ENCODE measurements at regions of chr6 and their contacts with region 1.

Region 1: DNA sequence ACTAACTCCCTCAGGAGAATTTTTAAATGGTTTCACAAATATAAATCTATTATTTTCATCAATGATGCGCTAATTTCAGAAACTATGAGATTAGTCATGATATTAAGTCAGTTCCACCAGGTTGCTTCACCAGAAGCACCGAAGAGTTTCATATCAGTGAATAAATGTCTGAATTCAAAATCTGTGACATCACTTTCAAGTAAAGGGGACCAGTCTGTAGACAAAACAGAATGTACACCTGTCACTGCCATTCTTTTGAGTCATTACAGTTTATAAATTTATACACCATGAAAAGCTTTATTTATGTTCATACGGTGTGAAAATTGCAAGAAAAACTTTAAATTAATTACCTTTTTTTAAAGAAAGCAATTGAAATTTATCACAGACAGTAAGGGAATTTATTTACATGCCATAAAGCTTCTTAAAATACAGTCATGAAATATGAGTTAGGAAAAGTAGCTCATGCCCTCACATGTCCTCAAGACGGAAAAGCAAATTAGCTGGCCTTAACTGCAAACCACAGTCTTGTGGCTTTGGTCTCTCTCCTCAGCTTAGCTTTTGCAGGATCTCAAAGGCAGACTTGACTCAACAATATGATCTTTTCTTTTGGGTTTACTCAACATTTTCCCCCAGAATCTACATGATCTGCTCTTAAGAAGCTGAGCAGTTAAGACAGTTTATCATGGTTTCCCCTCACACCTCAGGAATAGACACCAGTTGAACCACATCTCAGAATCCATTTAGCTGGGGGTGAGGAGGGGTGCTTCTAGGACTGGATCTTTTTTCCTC is 177.7 kb upstream of the MCHR2 start:
- DNase-seq: peak; percentile 12
- H3K4me3 Mint-ChIP-seq: no peak overlapping the region
- H3K27ac Mint-ChIP-seq: no peak overlapping the region
- H3K4me1 Mint-ChIP-seq: peaks cover 24% of the 10 kb centered on the region
- H3K27me3 Mint-ChIP-seq: peaks cover 4% of the 10 kb centered on the region

Region 2: GRCh38 chr6:98678481-98678880 is 1493.2 kb before region 1 on chr6:
- intact Hi-C with region 1: no loop called
- DNase-seq: no peak
- H3K4me3 Mint-ChIP-seq: no peak overlapping the region
- H3K27ac Mint-ChIP-seq: no peak overlapping the region
- H3K4me1 Mint-ChIP-seq: no peaks in the 10 kb centered on the region
- H3K27me3 Mint-ChIP-seq: peaks cover 4% of the 10 kb centered on the region

Region 3: DNA sequence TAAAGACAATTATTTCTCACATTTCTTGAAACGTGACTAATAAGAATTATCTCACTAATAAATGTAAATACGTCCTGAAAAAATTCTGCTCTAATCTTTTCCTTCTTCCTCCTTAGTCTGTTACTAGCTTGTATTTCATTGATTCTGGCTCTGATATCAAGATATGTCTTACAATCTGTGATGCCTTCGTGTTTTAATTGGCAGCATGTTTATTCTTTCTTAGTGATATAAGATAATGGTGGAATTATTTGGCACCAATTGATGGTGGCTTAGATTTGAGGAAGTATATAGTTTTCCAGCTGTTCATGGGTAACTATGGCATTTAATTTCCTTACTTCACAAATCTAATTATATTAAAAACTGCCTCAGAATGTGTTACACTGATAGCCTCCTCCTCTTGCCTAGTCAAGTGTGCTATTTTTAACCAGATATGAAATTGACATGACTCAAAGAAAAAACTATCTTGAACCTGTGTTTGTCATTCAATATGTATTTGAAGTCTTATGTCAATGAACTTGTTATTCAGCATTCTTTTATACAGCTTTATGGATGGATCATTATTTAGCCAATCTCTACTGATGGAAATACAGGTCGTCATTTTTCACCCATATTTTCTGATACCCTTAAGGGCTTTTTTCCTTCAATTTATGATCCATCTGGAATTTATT is 608.5 kb before region 1 on chr6:
- intact Hi-C with region 1: no loop called
- DNase-seq: no peak
- H3K4me3 Mint-ChIP-seq: no peak overlapping the region
- H3K27ac Mint-ChIP-seq: no peak overlapping the region
- H3K4me1 Mint-ChIP-seq: peaks cover 35% of the 10 kb centered on the region
- H3K27me3 Mint-ChIP-seq: no peaks in the 10 kb centered on the region

Region 4: DNA sequence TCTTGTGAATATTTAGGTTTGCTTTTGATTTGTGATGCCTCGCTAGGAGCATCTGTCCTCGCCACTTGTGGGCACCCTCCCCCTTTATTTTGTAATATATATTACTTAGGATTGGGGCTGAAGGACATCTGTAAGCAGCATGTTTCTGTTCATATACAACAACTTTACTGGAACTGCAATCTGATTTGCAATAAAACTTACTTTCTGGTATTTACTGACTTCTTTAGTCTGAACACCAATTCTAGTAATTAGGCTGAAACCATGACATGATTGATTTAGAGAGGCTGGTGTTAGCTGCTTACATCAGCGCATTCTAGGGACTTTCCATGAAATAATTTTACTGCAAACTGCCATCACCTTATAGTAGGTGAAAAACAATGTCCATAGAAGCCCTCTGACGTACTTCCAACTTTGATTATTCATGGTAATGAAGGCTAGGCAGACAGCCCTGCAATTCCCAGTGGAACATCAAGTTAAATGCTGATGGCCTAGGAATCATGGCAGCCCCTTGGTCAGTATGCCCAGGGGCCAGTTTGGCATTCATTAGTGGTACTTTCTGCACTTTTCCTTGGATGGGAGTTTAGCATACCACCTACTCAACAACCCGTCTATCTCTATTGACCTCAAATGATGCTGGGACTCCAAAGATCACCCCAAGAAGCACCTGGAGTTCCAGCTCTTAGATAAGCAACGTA is 44.8 kb before region 1 on chr6:
- intact Hi-C with region 1: loop called (anchors 5 kb)
- DNase-seq: no peak
- H3K4me3 Mint-ChIP-seq: no peak overlapping the region
- H3K27ac Mint-ChIP-seq: peak overlapping the region; percentile 38
- H3K4me1 Mint-ChIP-seq: peaks cover 6% of the 10 kb centered on the region
- H3K27me3 Mint-ChIP-seq: no peaks in the 10 kb centered on the region

Region 5: DNA sequence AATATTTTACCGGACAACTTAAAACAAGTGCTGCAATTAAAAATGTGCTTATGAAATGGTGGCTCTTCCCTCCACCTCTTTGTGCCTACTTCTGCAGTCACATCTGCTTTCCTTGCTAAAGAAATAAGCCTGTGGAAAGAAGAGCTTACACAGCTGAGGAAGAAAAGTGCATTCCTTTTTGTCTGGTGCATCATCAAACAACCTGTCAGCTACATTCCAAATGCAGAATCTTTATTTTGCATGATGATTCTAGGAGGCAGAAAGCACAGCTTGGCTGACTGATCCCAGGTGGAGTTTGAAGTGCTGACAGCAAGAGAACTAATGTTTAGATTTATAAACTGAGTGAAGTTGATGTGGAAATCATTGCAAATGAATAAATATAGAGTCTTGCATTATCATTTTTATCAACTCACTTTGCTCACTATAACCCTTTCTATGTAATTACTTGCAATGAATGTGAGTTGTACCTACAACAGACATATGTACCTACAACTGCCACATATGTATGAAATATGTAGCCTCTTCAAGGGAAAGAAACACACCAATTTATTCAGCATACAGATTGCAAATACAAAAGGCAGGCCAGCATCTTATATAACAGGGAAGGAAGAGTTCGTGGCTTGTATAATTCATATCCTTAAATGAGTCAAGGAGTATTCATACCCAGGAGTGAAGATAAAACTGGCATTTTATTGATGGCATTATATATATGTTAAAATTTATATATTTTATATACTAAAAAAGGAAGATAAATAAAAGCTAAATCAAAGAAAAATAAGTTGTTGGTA is 45.7 kb after region 1 on chr6:
- intact Hi-C with region 1: no loop called
- DNase-seq: no peak
- H3K4me3 Mint-ChIP-seq: no peak overlapping the region
- H3K27ac Mint-ChIP-seq: no peak overlapping the region
- H3K4me1 Mint-ChIP-seq: no peaks in the 10 kb centered on the region
- H3K27me3 Mint-ChIP-seq: peaks cover 9% of the 10 kb centered on the region

Region 6: GRCh38 chr6:100228831-100229641 is 57.3 kb after region 1 on chr6:
- intact Hi-C with region 1: loop called (anchors 5 kb)
- DNase-seq: peak; percentile 38
- H3K4me3 Mint-ChIP-seq: peak overlapping the region; percentile 66
- H3K27ac Mint-ChIP-seq: peak overlapping the region; percentile 71
- H3K4me1 Mint-ChIP-seq: peaks cover 23% of the 10 kb centered on the region
- H3K27me3 Mint-ChIP-seq: peaks cover 6% of the 10 kb centered on the region

Region 7: GRCh38 chr6:100472674-100473073 is 300.9 kb after region 1 on chr6:
- intact Hi-C with region 1: loop called (anchors 5 kb)
- DNase-seq: peak; percentile 41
- H3K4me3 Mint-ChIP-seq: no peak overlapping the region
- H3K27ac Mint-ChIP-seq: no peak overlapping the region
- H3K4me1 Mint-ChIP-seq: peaks cover 16% of the 10 kb centered on the region
- H3K27me3 Mint-ChIP-seq: peaks cover 43% of the 10 kb centered on the region

Region 8: GRCh38 chr6:100568255-100568654 is 396.5 kb after region 1 on chr6:
- intact Hi-C with region 1: no loop called
- DNase-seq: no peak
- H3K4me3 Mint-ChIP-seq: no peak overlapping the region
- H3K27ac Mint-ChIP-seq: no peak overlapping the region
- H3K4me1 Mint-ChIP-seq: no peaks in the 10 kb centered on the region
- H3K27me3 Mint-ChIP-seq: no peaks in the 10 kb centered on the region